CD8-positive, alpha-beta memory T cell (primary cell): ENCODE measurements at regions of chr14 and their contacts with region 1.

Region 1: DNA sequence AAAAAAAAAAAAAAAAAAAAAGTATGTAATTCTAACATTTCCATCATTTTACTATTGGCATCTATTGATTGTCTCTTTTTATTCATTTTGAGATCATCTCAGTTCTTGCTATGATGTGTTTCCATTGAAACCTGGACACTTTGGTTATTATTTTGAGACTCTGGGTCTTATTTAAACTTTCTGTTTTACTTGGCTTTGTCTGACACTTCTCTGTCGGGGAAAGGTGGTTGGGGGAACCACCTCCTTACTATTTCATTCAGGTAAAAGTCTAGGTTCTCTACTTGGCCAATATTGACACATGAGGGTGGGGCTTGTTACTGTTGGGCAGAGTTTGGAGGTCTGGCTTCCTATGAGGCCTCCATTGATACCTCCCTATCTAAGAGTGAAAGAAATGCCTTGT is 228.0 kb downstream of the NRXN3 start:
- DNase-seq: no peak
- H3K4me3 ChIP-seq: no peak overlapping the region
- H3K4me3 Mint-ChIP-seq: no peak overlapping the region
- H3K27ac ChIP-seq: no peak overlapping the region
- H3K27ac Mint-ChIP-seq: no peak overlapping the region
- H3K4me1 ChIP-seq: no peaks in the 10 kb centered on the region
- H3K4me1 Mint-ChIP-seq: no peaks in the 10 kb centered on the region
- H3K27me3 ChIP-seq: no peaks in the 10 kb centered on the region
- H3K27me3 Mint-ChIP-seq: peaks cover 0 to 4% of the 10 kb centered on the region in 2 donors

Region 2: GRCh38 chr14:78469746-78470346 is 71.6 kb after region 1 on chr14:
- CTCF ChIA-PET with region 1: no interaction called
- POLR2A ChIA-PET with region 1: interaction called, 10 read pairs
- DNase-seq: no peak
- H3K4me3 ChIP-seq: no peak overlapping the region
- H3K4me3 Mint-ChIP-seq: no peak overlapping the region
- H3K27ac ChIP-seq: no peak overlapping the region
- H3K27ac Mint-ChIP-seq: no peak overlapping the region
- H3K4me1 ChIP-seq: no peaks in the 10 kb centered on the region
- H3K4me1 Mint-ChIP-seq: no peaks in the 10 kb centered on the region
- H3K27me3 ChIP-seq: no peaks in the 10 kb centered on the region
- H3K27me3 Mint-ChIP-seq: peaks cover 0 to 1% of the 10 kb centered on the region in 2 donors